ENCODE measurements at regions of chr1 and their contacts with region 1.

Region 1: GRCh38 chr1:154936555-154937084 is at the start of gene PMVK:
- DNase-seq: peak; percentile 96
- H3K4me3 Mint-ChIP-seq: peak within 1 kb of the TSS; percentile 90
- H3K27ac Mint-ChIP-seq: peak within 1 kb of the TSS; percentile 96
- H3K4me1 Mint-ChIP-seq: peaks cover 55% of the 10 kb centered on the region
- H3K27me3 Mint-ChIP-seq: no peaks in the 10 kb centered on the region
- total RNA-seq, gene PMVK: 51.2 to 54.0 TPM

Region 2: DNA sequence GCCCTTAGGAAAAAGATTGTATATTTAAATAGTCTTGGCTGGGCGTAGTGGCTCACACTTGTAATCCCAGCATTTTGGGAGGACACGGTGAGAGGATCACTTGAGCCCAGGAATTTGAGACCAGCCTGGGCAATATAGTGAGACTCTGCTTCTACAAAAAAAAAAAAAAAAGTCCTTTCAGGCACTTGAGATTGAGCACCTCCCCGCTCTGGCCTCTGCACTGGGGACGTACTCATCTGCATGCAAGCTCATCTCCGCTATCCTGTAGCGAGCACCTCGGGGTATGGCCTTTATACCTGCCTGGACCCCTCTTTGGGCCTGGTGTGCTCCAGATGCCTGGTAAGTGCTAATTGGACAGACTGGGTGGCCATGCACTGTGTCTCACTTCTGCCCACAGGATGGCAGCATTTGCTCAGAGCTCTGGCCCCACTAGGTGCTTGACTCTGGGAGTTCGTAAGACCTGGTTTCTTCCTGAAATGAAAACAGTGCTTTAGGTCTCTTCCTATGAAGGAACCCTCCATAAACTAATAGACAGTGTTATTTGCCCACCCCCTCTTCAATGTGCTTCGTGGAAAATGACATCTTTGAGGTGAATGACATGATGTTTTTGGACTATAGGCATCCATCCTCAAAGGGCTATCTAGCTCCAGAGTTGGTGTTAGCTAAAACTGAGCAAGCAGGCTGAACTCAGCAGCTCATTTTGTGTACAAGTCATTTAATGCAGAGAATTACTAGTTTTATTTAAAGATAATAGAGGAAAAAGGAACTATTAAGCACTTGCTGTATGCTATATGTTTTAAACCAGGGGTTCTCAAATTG is 266.9 kb before region 1 on chr1:
- CTCF ChIA-PET with region 1: interaction called, 6 read pairs
- POLR2A ChIA-PET with region 1: no interaction called
- intact Hi-C with region 1: loop called (anchors 2 kb)
- DNase-seq: peak; percentile 86
- H3K4me3 Mint-ChIP-seq: no peak overlapping the region
- H3K27ac Mint-ChIP-seq: peak overlapping the region; percentile 24
- H3K4me1 Mint-ChIP-seq: no peaks in the 10 kb centered on the region
- H3K27me3 Mint-ChIP-seq: no peaks in the 10 kb centered on the region

Region 3: GRCh38 chr1:154878371-154879022 is 58.1 kb before region 1 on chr1:
- CTCF ChIA-PET with region 1: interaction called, 13 read pairs
- POLR2A ChIA-PET with region 1: no interaction called
- intact Hi-C with region 1: no loop called
- DNase-seq: peak; percentile 84
- H3K4me3 Mint-ChIP-seq: no peak overlapping the region
- H3K27ac Mint-ChIP-seq: no peak overlapping the region
- H3K4me1 Mint-ChIP-seq: peaks cover 14% of the 10 kb centered on the region
- H3K27me3 Mint-ChIP-seq: peaks cover 3% of the 10 kb centered on the region

Region 4: DNA sequence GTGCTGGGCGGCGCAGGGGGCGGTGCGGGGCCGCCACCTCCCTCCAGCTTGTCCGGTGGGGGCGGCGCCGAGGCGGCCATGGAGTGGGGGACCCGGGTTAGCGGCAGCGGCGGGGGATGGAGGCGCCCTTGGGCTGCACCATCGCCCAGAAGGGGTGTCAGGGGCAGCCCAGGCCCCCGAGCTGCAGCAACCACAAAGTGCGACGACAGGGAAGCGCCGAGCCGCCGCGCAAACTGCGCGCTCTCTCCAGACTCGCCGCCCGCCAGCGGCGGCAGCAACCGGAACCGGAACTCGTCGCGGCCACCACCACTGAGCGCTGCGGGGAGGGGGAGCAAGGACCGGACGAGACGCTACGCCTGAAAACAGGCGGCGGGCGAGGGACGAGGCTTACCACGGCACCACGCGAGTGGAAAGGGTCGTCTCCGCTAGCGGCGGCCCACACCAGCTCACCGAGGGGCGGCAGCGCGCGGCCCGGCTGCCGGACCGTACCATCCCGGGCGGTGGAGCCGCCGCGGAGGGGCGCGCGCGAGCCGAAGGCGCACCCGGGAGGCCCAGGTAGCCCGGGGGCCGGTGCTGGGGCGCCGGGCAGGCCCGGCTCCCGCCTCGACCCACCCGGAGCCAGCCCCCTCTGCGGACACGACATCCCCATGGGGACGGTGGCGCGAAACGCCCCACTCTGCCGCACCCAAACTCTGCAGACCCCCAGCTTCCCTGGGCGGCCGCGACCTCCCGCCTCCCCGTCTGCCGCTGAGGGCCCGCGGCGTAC is 25.1 kb after region 1 on chr1 and contains the start of gene PYGO2:
- CTCF ChIA-PET with region 1: interaction called, 14 read pairs
- POLR2A ChIA-PET with region 1: interaction called, 13 read pairs
- intact Hi-C with region 1: no loop called
- DNase-seq: peak; percentile 88
- H3K4me3 Mint-ChIP-seq: peak within 1 kb of the TSS; percentile 96
- H3K27ac Mint-ChIP-seq: peak within 1 kb of the TSS; percentile 92
- H3K4me1 Mint-ChIP-seq: peaks cover 36% of the 10 kb centered on the region
- H3K27me3 Mint-ChIP-seq: no peaks in the 10 kb centered on the region
- total RNA-seq, gene PYGO2: 31.5 to 32.4 TPM

Region 5: DNA sequence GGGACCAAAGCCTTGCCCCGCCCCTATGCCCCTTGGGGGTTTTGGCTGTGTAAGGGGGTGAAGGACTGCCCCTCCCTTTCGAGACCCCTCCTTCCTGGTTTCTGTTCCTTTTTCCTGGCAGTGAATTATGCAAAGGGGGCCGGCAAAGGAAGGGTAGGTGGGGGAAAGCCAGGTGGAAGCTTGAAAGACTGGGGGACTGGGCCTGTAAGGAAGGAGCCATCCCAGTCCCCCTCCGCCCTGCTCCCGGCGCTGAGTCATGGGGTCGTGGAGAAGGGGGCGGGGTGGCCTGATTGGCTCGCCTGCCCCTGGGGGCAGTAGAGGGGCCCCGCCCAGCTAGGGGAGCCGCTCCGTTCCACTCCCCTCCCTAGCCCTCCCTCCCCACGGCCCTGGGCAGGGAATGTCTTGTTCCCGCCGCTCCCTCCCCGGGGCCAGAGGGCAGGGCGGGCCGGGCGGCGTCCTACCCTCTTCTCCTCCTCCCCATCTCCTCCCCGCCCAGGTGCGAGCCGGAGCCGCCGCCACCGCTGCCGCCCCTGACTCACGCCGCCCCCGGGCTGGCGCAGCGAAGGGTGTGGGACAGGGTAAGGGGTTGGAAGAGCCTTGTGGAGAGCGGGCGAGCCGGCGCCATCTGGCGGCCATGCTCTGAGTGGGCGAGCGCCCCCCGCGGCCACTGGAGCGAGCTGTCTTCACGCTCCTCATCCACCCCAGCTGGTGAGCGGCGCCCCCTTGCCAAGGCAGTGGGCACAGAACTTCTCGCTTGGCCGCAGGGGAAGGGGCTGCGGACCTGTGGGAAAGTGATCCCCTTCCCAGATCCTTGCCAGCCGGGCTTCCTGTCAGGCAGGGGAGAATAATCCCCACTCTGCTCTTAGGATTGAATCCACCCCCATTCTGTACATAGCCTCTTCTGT is 80.7 kb after region 1 on chr1:
- CTCF ChIA-PET with region 1: interaction called, 13 read pairs
- POLR2A ChIA-PET with region 1: interaction called, 5 read pairs
- intact Hi-C with region 1: no loop called
- DNase-seq: peak; percentile 97
- H3K4me3 Mint-ChIP-seq: peak overlapping the region; percentile 37
- H3K27ac Mint-ChIP-seq: peak overlapping the region; percentile 78
- H3K4me1 Mint-ChIP-seq: peaks cover 63% of the 10 kb centered on the region
- H3K27me3 Mint-ChIP-seq: no peaks in the 10 kb centered on the region

Region 6: DNA sequence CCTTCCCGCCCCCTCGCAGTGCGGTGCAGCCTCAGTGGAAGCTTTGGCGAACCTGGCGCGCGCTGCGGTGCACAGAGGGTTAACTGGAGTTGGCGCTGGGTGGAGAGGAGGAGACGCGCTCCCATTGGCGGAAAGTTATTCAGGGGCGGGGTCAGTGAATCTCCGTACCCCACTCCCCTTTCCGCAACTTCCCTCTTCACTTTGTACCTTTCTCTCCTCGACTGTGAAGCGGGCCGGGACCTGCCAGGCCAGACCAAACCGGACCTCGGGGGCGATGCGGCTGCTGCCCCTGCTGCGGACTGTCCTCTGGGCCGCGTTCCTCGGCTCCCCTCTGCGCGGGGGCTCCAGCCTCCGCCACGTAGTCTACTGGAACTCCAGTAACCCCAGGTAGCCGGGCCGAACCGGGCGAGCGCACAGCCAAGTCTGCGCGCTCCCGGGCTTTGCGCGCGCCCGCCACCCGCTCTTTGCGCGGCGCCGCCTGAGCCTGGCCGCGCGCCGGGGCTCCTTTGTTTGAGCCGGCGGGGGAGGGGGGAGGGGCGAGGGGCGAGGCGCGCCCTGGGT is 127.0 kb after region 1 on chr1 and contains the start of gene EFNA4:
- CTCF ChIA-PET with region 1: interaction called, 7 read pairs
- POLR2A ChIA-PET with region 1: interaction called, 5 read pairs
- intact Hi-C with region 1: loop called (anchors 5 kb)
- DNase-seq: peak; percentile 89
- H3K4me3 Mint-ChIP-seq: peak within 1 kb of the TSS; percentile 80
- H3K27ac Mint-ChIP-seq: peak within 1 kb of the TSS; percentile 31
- H3K4me1 Mint-ChIP-seq: peaks cover 29% of the 10 kb centered on the region
- H3K27me3 Mint-ChIP-seq: no peaks in the 10 kb centered on the region
- total RNA-seq, gene EFNA4: 5.0 to 6.1 TPM

Measured in activated CD4-positive, alpha-beta memory T cell treated with anti-CD3 and anti-CD28 coated beads for 36 hours (primary cell).